ENCODE measurements at regions of chr6 and their contacts with region 1.

Region 1: DNA sequence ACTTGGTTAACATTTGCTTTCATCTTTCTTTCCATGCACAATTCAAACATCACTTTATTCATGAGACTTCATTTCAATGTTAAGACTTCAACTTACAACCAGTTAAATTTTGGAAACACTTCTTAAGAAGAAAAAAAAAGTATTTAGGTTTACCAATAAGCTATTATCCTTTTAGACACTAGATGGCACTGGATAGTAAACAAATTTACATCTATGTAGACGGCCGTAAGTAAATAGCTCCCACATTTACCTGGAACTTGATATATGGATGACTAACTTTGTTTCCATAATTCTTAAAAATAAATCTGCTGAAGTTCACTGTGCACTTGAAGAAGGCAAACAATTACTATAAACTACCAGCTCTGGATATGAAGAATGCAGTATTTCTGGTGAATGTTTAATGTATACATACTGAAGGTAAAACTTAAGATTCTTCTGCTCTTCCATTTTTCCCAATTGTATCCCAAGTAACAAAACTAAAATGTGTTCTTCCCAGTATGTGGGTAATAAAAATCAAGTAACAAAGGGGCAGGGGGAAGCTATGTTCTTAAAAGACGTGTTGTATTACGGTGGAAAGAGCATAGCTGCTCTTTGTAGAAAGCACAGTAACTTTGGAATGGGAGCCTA is 130.6 kb upstream of the C6orf118 start:
- DNase-seq: no peak
- ATAC-seq: peak; percentile 64
- H3K4me3 ChIP-seq: no peak overlapping the region
- H3K27ac ChIP-seq: no peak overlapping the region
- H3K4me1 ChIP-seq: no peaks in the 10 kb centered on the region
- H3K27me3 ChIP-seq: no peaks in the 10 kb centered on the region
- CTCF ChIP-seq: peak; percentile 39 to 57 (median 48); a peak in 4 of 6 replicates
- EP300 ChIP-seq: no peak
- POLR2A ChIP-seq: no peak
- RAD21 ChIP-seq: peak; percentile 57

Region 2: DNA sequence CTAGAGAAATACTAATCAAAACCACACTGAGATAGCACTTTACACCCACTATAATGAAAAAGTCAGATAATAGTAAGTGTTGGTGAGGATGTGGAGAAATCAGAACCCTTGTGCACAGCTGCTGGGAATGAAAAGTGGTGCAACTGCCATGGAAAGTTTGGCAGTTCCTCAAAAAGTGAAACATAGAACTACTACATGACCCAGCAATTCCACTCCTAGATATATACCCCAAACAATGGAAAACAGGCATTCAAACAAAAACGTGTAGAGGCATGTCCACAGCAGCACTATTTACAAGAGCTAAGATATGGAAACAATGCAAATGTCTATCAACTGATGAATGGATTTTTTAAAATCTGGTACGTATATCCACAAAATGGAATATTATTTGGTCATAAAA is 13.1 kb before region 1 on chr6:
- CTCF ChIA-PET with region 1: interaction called, 17 read pairs
- POLR2A ChIA-PET with region 1: no interaction called
- RAD21 ChIA-PET with region 1: interaction called, 3 read pairs
- SMC1A ChIA-PET with region 1: no interaction called
- in situ Hi-C with region 1: no loop called
- intact Hi-C with region 1: no loop called
- DNase-seq: no peak
- ATAC-seq: no peak
- H3K4me3 ChIP-seq: no peak overlapping the region
- H3K27ac ChIP-seq: no peak overlapping the region
- H3K4me1 ChIP-seq: no peaks in the 10 kb centered on the region
- H3K27me3 ChIP-seq: no peaks in the 10 kb centered on the region
- CTCF ChIP-seq: no peak
- EP300 ChIP-seq: no peak
- POLR2A ChIP-seq: no peak
- RAD21 ChIP-seq: no peak

Region 3: GRCh38 chr6:165456286-165456685 is 16.2 kb after region 1 on chr6:
- CTCF ChIA-PET with region 1: interaction called, 13 read pairs
- POLR2A ChIA-PET with region 1: no interaction called
- RAD21 ChIA-PET with region 1: interaction called, 5 read pairs
- SMC1A ChIA-PET with region 1: interaction called, 6 read pairs
- in situ Hi-C with region 1: no loop called
- intact Hi-C with region 1: no loop called
- DNase-seq: no peak
- ATAC-seq: peak; percentile 66
- H3K4me3 ChIP-seq: no peak overlapping the region
- H3K27ac ChIP-seq: no peak overlapping the region
- H3K4me1 ChIP-seq: no peaks in the 10 kb centered on the region
- H3K27me3 ChIP-seq: no peaks in the 10 kb centered on the region
- CTCF ChIP-seq: no peak
- EP300 ChIP-seq: no peak
- POLR2A ChIP-seq: no peak
- RAD21 ChIP-seq: no peak

Region 4: GRCh38 chr6:165556116-165556843 is 116.2 kb after region 1 on chr6:
- CTCF ChIA-PET with region 1: no interaction called
- POLR2A ChIA-PET with region 1: no interaction called
- RAD21 ChIA-PET with region 1: no interaction called
- SMC1A ChIA-PET with region 1: no interaction called
- in situ Hi-C with region 1: no loop called
- intact Hi-C with region 1: no loop called
- DNase-seq: no peak
- ATAC-seq: peak; percentile 77
- H3K4me3 ChIP-seq: no peak overlapping the region
- H3K27ac ChIP-seq: no peak overlapping the region
- H3K4me1 ChIP-seq: no peaks in the 10 kb centered on the region
- H3K27me3 ChIP-seq: no peaks in the 10 kb centered on the region
- CTCF ChIP-seq: no peak
- EP300 ChIP-seq: no peak
- POLR2A ChIP-seq: no peak
- RAD21 ChIP-seq: no peak

Region 5: DNA sequence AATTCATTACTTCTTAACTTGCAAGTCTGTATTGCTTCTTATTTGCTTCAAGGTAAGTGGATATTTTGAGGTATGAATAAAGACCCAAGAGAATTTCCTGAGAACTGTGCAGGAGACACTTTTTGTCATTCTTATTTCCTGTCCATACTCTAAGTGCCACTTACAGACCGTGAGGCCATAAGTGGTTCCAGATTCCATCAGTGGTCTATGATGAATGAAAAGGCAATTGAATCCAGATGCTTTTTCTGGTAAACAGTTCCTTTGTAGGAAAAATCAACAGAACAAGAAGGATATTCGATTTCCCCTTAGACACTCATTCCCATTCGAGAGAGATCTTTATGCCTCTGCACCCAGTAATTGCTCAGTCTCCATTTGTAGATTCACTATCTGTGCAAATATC is 281.3 kb after region 1 on chr6:
- CTCF ChIA-PET with region 1: interaction called, 13 read pairs
- POLR2A ChIA-PET with region 1: no interaction called
- RAD21 ChIA-PET with region 1: interaction called, 6 read pairs
- SMC1A ChIA-PET with region 1: no interaction called
- in situ Hi-C with region 1: no loop called
- intact Hi-C with region 1: loop called (anchors 5 kb)
- DNase-seq: no peak
- ATAC-seq: no peak
- H3K4me3 ChIP-seq: no peak overlapping the region
- H3K27ac ChIP-seq: no peak overlapping the region
- H3K4me1 ChIP-seq: no peaks in the 10 kb centered on the region
- H3K27me3 ChIP-seq: no peaks in the 10 kb centered on the region
- CTCF ChIP-seq: no peak
- EP300 ChIP-seq: no peak
- POLR2A ChIP-seq: no peak
- RAD21 ChIP-seq: no peak

Region 6: DNA sequence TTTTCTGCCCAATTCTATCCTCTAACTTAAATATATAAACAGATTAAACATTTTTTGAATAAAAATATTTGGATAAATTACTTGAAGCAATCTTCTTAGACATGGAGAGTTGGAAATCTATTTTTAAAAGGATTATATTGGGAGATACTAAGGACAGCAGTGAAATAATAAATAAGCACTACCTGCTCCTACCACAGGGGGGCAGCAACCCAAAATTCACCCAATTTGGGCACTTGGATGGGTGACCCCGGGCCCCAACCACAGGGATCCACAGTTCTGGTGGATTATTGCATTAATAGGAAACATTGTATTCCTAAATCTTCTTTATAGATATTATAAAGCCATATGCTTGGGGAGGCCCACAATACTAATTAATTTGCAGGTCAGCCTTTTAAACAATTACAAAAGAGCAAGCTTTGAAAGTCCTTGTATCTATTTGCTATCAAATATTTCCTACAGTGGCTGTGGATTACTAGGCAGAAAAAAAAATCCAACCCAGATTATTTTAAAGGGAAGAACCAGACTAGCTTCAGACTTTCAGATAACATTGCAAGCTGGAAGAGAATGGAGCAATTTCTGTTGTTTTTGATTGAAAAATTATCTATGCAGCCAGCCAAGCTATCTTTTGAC is 289.4 kb after region 1 on chr6:
- CTCF ChIA-PET with region 1: interaction called, 13 read pairs
- POLR2A ChIA-PET with region 1: no interaction called
- RAD21 ChIA-PET with region 1: interaction called, 14 read pairs
- SMC1A ChIA-PET with region 1: interaction called, 5 read pairs
- in situ Hi-C with region 1: no loop called
- intact Hi-C with region 1: loop called (anchors 5 kb)
- DNase-seq: no peak
- ATAC-seq: peak; percentile 67
- H3K4me3 ChIP-seq: no peak overlapping the region
- H3K27ac ChIP-seq: no peak overlapping the region
- H3K4me1 ChIP-seq: no peaks in the 10 kb centered on the region
- H3K27me3 ChIP-seq: no peaks in the 10 kb centered on the region
- CTCF ChIP-seq: peak; percentile 63 to 67 (median 66)
- EP300 ChIP-seq: no peak
- POLR2A ChIP-seq: no peak
- RAD21 ChIP-seq: peak; percentile 45

Region 7: DNA sequence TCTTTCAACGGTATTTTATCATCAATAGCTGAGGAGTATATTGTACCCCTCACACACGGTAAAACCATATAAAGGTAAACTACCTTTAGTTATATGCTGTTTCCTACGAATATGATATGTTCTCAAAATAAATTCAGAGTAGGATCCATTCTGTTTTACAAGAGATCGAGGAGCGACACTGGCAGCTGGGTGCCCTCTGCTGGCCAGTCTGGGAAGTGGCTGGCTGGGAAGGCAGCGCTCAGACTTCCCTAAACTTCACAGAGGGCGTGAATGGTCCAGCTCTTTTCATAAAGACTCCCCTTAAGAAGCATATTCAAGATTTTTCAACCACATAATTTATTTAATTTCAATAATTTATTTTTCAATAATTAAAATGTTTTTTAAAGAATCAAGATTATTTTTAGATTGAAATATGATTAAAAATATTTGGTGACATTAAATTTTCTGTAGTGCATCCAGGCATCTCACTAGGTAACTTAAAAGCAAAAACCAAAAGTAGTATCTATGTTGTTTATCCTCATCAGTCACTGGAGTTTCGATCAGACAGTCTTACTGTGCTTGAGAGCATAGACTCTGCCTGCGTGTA is 410.5 kb after region 1 on chr6:
- CTCF ChIA-PET with region 1: interaction called, 108 read pairs
- POLR2A ChIA-PET with region 1: no interaction called
- RAD21 ChIA-PET with region 1: interaction called, 28 read pairs
- SMC1A ChIA-PET with region 1: interaction called, 29 read pairs
- in situ Hi-C with region 1: loop called (anchors 5 kb)
- intact Hi-C with region 1: loop called (anchors 1 kb)
- DNase-seq: no peak
- ATAC-seq: peak; percentile 92
- H3K4me3 ChIP-seq: no peak overlapping the region
- H3K27ac ChIP-seq: no peak overlapping the region
- H3K4me1 ChIP-seq: no peaks in the 10 kb centered on the region
- H3K27me3 ChIP-seq: no peaks in the 10 kb centered on the region; a peak in 2 of 4 replicates
- CTCF ChIP-seq: peak; percentile 94 to 99 (median 97); a peak in 5 of 6 replicates
- EP300 ChIP-seq: no peak
- POLR2A ChIP-seq: no peak
- RAD21 ChIP-seq: peak; percentile 77

Region 8: DNA sequence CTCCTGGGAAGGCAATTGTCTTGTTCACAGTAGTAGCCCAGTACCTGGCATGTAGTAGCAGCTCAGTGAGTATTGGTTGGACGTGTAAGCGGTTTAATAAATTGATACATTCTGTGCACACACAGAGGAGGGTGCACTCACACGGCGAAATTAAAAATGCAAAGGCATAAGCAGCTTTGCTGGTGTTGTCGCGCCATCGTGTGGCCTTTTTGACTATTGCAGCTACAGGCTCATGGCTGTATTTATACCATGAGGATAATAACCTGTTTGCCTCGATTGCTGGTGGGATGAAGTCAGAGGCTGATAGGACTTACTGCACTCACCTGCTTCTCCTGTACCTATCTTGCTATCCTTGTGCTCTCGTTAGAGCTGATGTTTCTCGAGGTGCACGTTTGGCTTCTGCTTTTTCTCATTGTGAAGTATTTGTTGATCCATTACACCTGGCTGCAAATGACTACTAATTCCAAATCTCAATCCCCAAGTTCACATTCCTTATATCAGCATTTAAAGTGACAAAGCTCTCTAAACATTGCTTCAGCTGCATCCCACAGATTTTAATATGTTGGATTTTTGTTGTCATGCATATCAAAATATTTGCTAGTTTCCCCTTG is 666.1 kb after region 1 on chr6:
- CTCF ChIA-PET with region 1: interaction called, 8 read pairs
- POLR2A ChIA-PET with region 1: no interaction called
- RAD21 ChIA-PET with region 1: interaction called, 4 read pairs
- SMC1A ChIA-PET with region 1: interaction called, 5 read pairs
- in situ Hi-C with region 1: no loop called
- intact Hi-C with region 1: loop called (anchors 10 kb)
- DNase-seq: peak; percentile 36
- ATAC-seq: peak; percentile 84
- H3K4me3 ChIP-seq: no peak overlapping the region
- H3K27ac ChIP-seq: no peak overlapping the region
- H3K4me1 ChIP-seq: no peaks in the 10 kb centered on the region; the same call in 1 of the 2 replicates
- H3K27me3 ChIP-seq: no peaks in the 10 kb centered on the region
- CTCF ChIP-seq: peak; percentile 81 to 95 (median 90)
- EP300 ChIP-seq: no peak
- POLR2A ChIP-seq: no peak
- RAD21 ChIP-seq: peak; percentile 91

Measured in GM12878 (cell line).